Heart left ventricle (tissue), 16 donors: ENCODE measurements at regions of chr7 and their contacts with region 1.

Region 1: GRCh38 chr7:139645572-139646523 is 122.4 kb downstream of the CLEC2L start:
- DNase-seq: peak; percentile 83 to 90 (median 85)
- ATAC-seq: peak; percentile 53 to 71 (median 54)
- H3K4me3 ChIP-seq: no peak overlapping the region
- H3K27ac ChIP-seq: peak overlapping the region in 9 of 12 donors; percentile 5 to 83 (median 77)
- H3K4me1 ChIP-seq: peaks cover 0 to 53% (median 44%) of the 10 kb centered on the region in 12 donors
- H3K27me3 ChIP-seq: no peaks in the 10 kb centered on the region
- CTCF ChIP-seq: peak; percentile 84 to 95 (median 92)
- POLR2A ChIP-seq: peak in 1 of 2 donors; percentile 24

Region 2: GRCh38 chr7:139696552-139696951 is 50.7 kb after region 1 on chr7:
- intact Hi-C with region 1: loop called in 2 of 10 experiments (anchors 5 to 10 kb)
- DNase-seq: no peak
- ATAC-seq: peak in 3 of 4 donors; percentile 30 to 44 (median 40)
- H3K4me3 ChIP-seq: no peak overlapping the region
- H3K27ac ChIP-seq: peak overlapping the region in 1 of 12 donors; percentile 37
- H3K4me1 ChIP-seq: peaks cover under 1 to 58% (median 29%) of the 10 kb centered on the region in 12 donors
- H3K27me3 ChIP-seq: no peaks in the 10 kb centered on the region
- CTCF ChIP-seq: no peak
- POLR2A ChIP-seq: no peak

Region 3: DNA sequence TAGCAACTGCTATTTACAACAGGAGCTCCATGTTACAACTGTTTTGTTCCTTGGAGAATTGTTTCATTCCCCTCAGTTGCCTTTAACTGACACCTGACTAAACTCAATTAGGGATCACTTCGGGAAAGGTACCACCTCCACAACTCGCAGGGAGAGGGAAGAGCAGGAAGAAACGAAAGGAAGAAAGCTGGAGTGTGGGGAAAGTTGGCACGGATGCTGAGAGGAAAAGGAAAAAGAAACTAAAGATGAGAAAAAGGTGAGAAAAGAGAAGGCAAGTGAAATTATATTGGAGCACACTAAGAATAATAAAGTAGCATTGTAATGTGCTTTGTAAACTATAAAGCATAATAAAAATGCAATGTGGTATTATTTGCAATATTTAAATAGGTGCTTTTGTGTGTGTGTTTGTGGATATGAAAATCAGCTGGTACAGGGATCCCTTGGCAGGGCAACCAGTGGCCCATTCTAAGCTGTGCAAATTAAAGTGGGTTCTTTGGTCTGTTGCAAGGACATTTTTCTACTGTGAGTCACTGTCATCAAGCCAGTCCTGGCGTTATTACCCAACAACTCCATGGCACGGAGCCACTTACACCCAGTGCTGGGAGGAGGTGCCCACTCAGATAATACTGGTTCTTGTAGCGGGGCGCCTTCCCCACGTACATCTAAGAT is 86.1 kb after region 1 on chr7:
- intact Hi-C with region 1: loop called in 4 of 10 experiments (anchors 2 to 5 kb)
- DNase-seq: peak; percentile 80 to 93 (median 84)
- ATAC-seq: peak; percentile 64 to 77 (median 76)
- H3K4me3 ChIP-seq: peak overlapping the region in 4 of 12 donors; percentile 6 to 19 (median 9)
- H3K27ac ChIP-seq: peak overlapping the region; percentile 76 to 97 (median 91)
- H3K4me1 ChIP-seq: peaks cover 42 to 96% (median 82%) of the 10 kb centered on the region in 12 donors
- H3K27me3 ChIP-seq: no peaks in the 10 kb centered on the region
- CTCF ChIP-seq: no peak
- POLR2A ChIP-seq: peak in 1 of 2 donors; percentile 34

Region 4: DNA sequence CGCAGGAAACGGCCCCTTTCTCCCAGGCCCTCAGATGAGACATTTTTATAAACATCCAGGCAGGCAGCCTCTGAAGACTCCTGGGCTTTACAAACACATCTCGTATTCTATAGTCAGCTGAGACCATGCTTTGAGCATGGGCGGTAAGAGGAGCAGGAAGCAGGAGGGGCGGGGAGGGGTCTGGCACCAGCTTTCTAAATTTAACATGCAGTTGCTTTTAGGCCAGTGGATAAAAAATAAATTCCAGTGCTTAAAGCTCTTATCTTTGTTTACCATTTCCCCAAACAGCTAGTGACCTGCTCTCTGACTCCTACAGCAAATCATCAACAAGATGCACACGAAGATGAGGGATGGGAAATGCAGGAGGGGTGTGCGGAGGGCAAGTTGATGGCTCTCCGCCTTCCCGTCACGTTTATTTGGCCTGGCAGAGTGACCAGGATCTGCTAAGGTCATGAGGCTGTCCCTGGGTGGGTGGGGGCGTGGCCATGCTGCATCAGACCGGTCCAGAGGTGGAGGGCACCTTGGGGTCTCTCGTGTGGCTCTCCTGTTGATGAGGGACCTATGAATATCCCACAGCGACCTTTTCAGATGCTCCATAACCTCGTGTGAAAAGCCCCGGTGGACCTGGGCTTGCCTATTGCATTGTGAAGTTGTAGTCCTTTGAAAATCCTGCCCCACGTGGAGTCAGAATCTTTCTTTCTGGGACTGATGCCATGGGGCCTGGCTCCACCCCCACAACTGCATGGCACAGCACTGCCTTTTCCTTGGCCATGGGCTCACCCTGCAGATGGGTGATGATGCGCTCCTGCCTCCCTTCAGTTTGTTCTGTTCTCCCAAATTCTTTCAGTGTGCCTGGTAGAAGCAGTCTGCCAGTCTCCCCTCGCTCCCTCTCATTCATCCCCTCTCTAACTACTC is 349.4 kb after region 1 on chr7:
- intact Hi-C with region 1: loop called in 3 of 10 experiments (anchors 2 to 5 kb)
- DNase-seq: peak in 4 of 5 donors; percentile 46 to 62 (median 54)
- ATAC-seq: peak; percentile 84 to 90 (median 86)
- H3K4me3 ChIP-seq: no peak overlapping the region
- H3K27ac ChIP-seq: no peak overlapping the region
- H3K4me1 ChIP-seq: peaks cover 0 to 9% (median 0%) of the 10 kb centered on the region in 12 donors
- H3K27me3 ChIP-seq: no peaks in the 10 kb centered on the region
- CTCF ChIP-seq: no peak
- POLR2A ChIP-seq: no peak

Region 5: DNA sequence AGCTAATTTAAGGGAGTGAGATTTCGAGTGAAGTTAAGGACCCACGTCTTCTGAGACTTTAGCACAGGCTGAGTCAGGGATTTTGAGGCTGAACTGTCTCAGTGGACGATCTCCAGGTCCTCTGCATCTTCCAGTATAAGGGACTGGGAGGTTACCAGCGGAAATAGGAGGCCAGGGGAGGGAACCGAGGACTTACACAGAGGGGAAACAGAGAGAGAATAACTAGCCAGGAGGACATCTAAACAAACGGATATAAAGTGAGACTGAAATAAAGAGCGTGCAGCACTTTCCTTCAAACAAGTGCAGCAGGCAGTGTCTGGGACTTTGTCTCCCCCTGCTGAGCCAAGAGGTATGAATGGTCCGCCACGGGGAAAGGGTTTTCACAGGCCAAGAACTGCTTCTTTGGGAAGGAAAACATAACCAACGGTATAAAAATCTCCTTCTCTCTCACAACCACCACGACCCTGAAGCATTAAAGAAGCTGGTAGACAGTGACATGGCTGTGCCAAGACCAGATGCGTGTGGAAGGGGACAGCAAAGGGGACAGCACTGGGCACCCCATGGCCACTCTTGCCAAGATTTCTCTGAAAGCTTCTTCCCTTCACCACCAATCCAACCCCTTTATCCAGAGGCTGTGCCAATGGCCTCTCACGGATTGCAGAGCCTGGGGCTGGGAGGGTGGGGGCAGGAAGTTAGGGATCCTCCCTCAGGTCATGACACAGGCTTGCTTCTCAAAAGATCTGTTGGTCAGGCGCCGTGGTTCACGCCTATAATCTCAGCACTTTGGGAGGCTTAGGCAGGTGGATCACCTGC is 680.5 kb after region 1 on chr7:
- intact Hi-C with region 1: loop called in 1 of 10 experiments (anchors 10 kb)
- DNase-seq: peak; percentile 51 to 69 (median 66)
- ATAC-seq: peak; percentile 66 to 95 (median 92)
- H3K4me3 ChIP-seq: peak overlapping the region in 5 of 12 donors; percentile 11 to 32 (median 19)
- H3K27ac ChIP-seq: peak overlapping the region in 1 of 12 donors; percentile 39
- H3K4me1 ChIP-seq: peaks cover 0 to 13% (median 5%) of the 10 kb centered on the region in 12 donors
- H3K27me3 ChIP-seq: no peaks in the 10 kb centered on the region
- CTCF ChIP-seq: peak; percentile 41 to 80 (median 65)
- POLR2A ChIP-seq: no peak